MCF 10A (cell line): ENCODE measurements at regions of chr6 and their contacts with region 1.

Region 1: DNA sequence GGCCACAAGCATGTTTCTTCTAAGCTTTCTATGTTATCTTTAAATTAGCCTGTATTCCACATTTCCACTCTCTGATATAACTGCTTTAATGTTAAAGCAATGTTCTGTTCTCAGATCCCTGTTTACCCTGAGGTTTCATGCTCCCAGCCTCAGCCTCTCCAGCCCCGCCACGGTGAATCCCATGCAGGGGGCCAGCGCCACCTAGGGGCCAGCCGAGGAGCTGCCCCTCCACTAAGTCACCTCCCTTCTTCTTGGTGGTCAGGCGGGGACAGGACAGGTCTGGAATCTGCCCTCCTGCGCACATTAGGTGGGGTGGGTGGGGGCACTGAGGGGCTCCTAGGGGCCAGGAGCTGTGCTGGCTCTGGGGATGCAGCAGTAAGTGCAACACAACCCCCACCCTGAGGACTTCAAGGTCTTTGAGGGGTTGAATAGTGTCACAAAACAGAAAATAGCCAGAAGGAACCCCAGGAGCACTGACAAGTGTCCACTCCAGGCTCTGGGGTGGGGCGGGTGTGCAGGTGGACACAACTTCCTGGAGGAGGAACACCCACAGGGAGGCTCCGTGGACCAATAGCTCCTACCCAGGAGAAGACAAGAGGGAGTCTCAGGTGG is 61.6 kb downstream of the RAB44 start:
- DNase-seq: peak; percentile 70
- H3K4me3 Mint-ChIP-seq: no peak overlapping the region
- H3K27ac Mint-ChIP-seq: no peak overlapping the region
- H3K4me1 Mint-ChIP-seq: peaks cover 11% of the 10 kb centered on the region
- H3K27me3 Mint-ChIP-seq: no peaks in the 10 kb centered on the region
- CTCF ChIP-seq: peak; percentile 97

Region 2: GRCh38 chr6:36032261-36032660 is 727.0 kb before region 1 on chr6:
- CTCF ChIA-PET with region 1: no interaction called
- POLR2A ChIA-PET with region 1: no interaction called
- intact Hi-C with region 1: no loop called
- DNase-seq: no peak
- H3K4me3 Mint-ChIP-seq: no peak overlapping the region
- H3K27ac Mint-ChIP-seq: no peak overlapping the region
- H3K4me1 Mint-ChIP-seq: peaks cover 15% of the 10 kb centered on the region
- H3K27me3 Mint-ChIP-seq: no peaks in the 10 kb centered on the region
- CTCF ChIP-seq: no peak

Region 3: GRCh38 chr6:36605560-36606391 is 153.5 kb before region 1 on chr6:
- CTCF ChIA-PET with region 1: interaction called, 14 read pairs
- POLR2A ChIA-PET with region 1: no interaction called
- intact Hi-C with region 1: no loop called
- DNase-seq: no peak
- H3K4me3 Mint-ChIP-seq: no peak overlapping the region
- H3K27ac Mint-ChIP-seq: no peak overlapping the region
- H3K4me1 Mint-ChIP-seq: peaks cover 32% of the 10 kb centered on the region
- H3K27me3 Mint-ChIP-seq: no peaks in the 10 kb centered on the region
- CTCF ChIP-seq: no peak

Region 4: GRCh38 chr6:36615018-36615761 is 144.1 kb before region 1 on chr6:
- CTCF ChIA-PET with region 1: interaction called, 37 read pairs
- POLR2A ChIA-PET with region 1: interaction called, 12 read pairs
- intact Hi-C with region 1: no loop called
- DNase-seq: peak; percentile 80
- H3K4me3 Mint-ChIP-seq: no peak overlapping the region
- H3K27ac Mint-ChIP-seq: no peak overlapping the region
- H3K4me1 Mint-ChIP-seq: peaks cover 15% of the 10 kb centered on the region
- H3K27me3 Mint-ChIP-seq: no peaks in the 10 kb centered on the region
- CTCF ChIP-seq: peak; percentile 74

Region 5: DNA sequence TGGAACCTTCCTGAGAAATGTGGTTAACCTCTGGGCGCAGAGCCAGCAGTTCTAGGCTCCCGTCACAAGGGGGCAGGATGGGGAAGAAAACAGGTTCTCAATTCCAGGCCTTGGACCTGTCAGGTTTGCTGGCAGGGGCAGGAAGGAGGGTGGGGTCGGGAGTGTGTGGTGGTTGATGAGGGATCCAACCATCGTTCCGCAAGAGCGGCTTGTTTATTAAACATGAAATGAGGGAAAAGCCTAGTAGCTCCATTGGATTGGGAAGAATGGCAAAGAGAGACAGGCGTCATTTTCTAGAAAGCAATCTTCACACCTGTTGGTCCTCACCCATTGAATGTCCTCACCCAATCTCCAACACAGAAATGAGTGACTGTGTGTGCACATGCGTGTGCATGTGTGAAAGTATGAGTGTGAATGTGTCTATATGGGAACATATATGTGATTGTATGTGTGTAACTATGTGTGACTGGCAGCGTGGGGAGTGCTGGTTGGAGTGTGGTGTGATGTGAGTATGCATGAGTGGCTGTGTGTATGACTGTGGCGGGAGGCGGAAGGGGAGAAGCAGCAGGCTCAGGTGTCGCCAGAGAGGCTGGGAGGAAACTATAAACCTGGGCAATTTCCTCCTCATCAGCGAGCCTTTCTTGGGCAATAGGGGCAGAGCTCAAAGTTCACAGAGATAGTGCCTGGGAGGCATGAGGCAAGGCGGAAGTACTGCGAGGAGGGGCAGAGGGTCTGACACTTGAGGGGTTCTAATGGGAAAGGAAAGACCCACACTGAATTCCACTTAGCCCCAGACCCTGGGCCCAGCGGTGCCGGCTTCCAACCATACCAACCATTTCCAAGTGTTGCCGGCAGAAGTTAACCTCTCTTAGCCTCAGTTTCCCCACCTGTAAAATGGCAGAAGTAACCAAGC is 135.5 kb before region 1 on chr6:
- CTCF ChIA-PET with region 1: interaction called, 37 read pairs
- POLR2A ChIA-PET with region 1: interaction called, 3 read pairs
- intact Hi-C with region 1: loop called (anchors 1 kb)
- DNase-seq: peak; percentile 88
- H3K4me3 Mint-ChIP-seq: no peak overlapping the region
- H3K27ac Mint-ChIP-seq: no peak overlapping the region
- H3K4me1 Mint-ChIP-seq: peaks cover 25% of the 10 kb centered on the region
- H3K27me3 Mint-ChIP-seq: no peaks in the 10 kb centered on the region
- CTCF ChIP-seq: peak; percentile 89

Region 6: GRCh38 chr6:36691612-36692011 is 67.6 kb before region 1 on chr6:
- CTCF ChIA-PET with region 1: interaction called, 12 read pairs
- POLR2A ChIA-PET with region 1: interaction called, 6 read pairs
- intact Hi-C with region 1: no loop called
- DNase-seq: no peak
- H3K4me3 Mint-ChIP-seq: no peak overlapping the region
- H3K27ac Mint-ChIP-seq: peak overlapping the region; percentile 36
- H3K4me1 Mint-ChIP-seq: peaks cover 25% of the 10 kb centered on the region
- H3K27me3 Mint-ChIP-seq: no peaks in the 10 kb centered on the region
- CTCF ChIP-seq: no peak

Region 7: DNA sequence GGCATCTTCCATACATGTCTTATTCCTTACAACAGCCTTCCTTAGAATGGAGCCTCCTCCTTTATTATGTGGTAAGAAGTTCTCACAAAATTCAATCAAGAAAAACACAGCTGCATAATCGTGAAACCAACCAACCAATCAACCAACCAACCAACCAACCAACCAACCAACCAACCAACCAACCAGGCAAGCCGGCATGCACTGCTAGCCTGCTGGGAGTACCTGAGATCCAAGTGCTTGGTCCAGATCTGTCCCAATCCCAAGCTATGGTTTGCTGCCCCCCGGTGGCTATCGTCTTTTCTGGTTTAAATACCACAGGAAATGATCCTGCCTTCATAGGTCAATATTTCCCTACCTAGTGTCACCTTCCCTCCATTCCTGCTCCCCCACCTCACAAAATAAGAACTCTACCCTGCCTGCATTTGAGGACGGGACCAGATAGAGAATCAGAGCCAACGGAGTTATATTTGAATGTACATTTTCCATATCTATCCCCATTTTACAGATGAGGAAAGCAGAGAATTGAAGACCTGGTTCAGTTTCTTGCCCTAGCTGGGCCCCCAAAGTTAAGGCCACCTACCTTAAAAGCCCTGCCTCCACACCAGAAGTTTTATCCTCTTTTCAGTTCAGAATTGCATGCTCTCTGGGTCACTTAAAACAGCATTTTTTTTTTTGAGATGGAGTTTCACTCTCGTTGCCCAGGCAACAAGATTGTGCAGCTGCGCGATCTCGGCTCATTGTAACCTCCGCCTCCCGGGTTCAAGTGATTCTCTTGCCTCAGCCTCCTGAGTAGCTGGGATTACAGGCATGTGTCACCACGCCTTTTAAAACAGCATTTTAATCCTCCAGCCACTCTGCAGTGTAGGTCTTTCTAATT is 34.5 kb before region 1 on chr6:
- CTCF ChIA-PET with region 1: interaction called, 3 read pairs
- POLR2A ChIA-PET with region 1: no interaction called
- intact Hi-C with region 1: loop called (anchors 2 kb)
- DNase-seq: peak; percentile 82
- H3K4me3 Mint-ChIP-seq: no peak overlapping the region
- H3K27ac Mint-ChIP-seq: no peak overlapping the region
- H3K4me1 Mint-ChIP-seq: peaks cover 18% of the 10 kb centered on the region
- H3K27me3 Mint-ChIP-seq: no peaks in the 10 kb centered on the region
- CTCF ChIP-seq: peak; percentile 71

Region 8: GRCh38 chr6:36851149-36851614 is 91.9 kb after region 1 on chr6:
- CTCF ChIA-PET with region 1: interaction called, 42 read pairs
- POLR2A ChIA-PET with region 1: no interaction called
- intact Hi-C with region 1: no loop called
- DNase-seq: peak; percentile 74
- H3K4me3 Mint-ChIP-seq: no peak overlapping the region
- H3K27ac Mint-ChIP-seq: no peak overlapping the region
- H3K4me1 Mint-ChIP-seq: peaks cover 17% of the 10 kb centered on the region
- H3K27me3 Mint-ChIP-seq: no peaks in the 10 kb centered on the region
- CTCF ChIP-seq: peak; percentile 83